Prostate gland (tissue), 2 donors: ENCODE measurements at regions of chr15 and their contacts with region 1.

Region 1: GRCh38 chr15:70826634-70827033 is 27.3 kb downstream of the LARP6 start:
- DNase-seq: no peak
- H3K4me3 ChIP-seq: no peak overlapping the region
- H3K27ac ChIP-seq: no peak overlapping the region
- H3K4me1 ChIP-seq: no peaks in the 10 kb centered on the region
- H3K27me3 ChIP-seq: no peaks in the 10 kb centered on the region
- CTCF ChIP-seq: no peak
- POLR2A ChIP-seq: no peak

Region 2: GRCh38 chr15:70875001-70875782 is 48.6 kb after region 1 on chr15:
- intact Hi-C with region 1: loop called (anchors 2 kb)
- DNase-seq: no peak
- H3K4me3 ChIP-seq: no peak overlapping the region
- H3K27ac ChIP-seq: peak overlapping the region in 1 of 2 donors; percentile 17
- H3K4me1 ChIP-seq: no peaks in the 10 kb centered on the region
- H3K27me3 ChIP-seq: no peaks in the 10 kb centered on the region
- CTCF ChIP-seq: peak in 3 of 4 experiments; percentile 23 to 54 (median 44)
- POLR2A ChIP-seq: no peak

Region 3: GRCh38 chr15:71048913-71049675 is 222.5 kb after region 1 on chr15:
- intact Hi-C with region 1: no loop called
- DNase-seq: no peak
- H3K4me3 ChIP-seq: no peak overlapping the region
- H3K27ac ChIP-seq: no peak overlapping the region
- H3K4me1 ChIP-seq: peaks cover 6% of the 10 kb centered on the region
- H3K27me3 ChIP-seq: no peaks in the 10 kb centered on the region
- CTCF ChIP-seq: no peak
- POLR2A ChIP-seq: no peak